ENCODE measurements at regions of chr22 and their contacts with region 1.

Region 1: DNA sequence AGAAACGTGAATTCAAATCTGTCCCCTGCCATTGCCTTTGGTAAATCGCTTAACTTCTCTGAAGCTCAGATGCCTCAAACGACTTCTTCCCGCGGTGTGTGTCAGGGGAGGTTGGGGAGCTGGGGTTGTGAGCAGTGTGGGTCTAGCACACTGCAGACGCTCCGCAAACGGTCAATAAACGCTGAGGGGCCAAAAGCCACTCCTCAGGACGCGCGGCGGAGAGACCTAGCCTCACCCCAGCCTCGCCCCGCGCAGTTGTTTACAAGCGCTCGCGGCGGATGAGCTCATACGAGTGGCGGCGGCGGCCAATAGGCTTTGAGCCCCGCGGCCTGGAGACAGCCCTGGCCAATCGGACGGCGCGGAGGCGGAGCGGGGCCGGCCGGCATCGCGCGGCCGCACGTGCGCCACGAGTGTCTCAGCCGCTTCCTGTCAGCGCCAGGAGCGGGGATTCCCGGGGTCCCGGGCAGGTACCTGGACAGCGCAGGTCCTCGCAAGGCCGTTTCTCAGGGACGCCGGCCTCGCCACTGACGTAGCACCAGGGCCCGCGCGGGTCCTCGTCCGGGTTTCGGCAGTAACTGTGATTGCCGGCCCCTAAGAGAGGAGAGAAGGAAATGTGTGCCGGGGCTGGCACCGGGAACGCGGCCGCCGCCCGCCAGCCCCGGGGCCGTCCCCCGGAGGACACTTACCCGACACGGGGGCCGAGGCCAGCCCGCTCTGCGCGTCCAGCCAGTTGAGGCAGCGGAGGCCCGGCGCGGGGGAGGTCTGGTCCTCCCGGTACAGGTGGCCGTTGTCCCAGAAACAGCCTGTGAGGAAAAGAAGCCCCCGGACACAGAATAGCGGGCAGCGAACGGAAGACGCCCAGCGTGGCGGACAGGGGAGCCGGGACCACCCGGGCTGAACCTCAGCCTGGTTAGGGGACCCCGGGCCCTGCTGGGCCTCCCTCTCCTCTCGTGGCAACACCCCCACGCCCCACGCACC is 1.5 kb downstream of the PIK3IP1 start:
- DNase-seq: peak; percentile 93 to 97 (median 96)
- ATAC-seq: peak; percentile 68 to 72
- H3K4me3 Mint-ChIP-seq: peak overlapping the region; percentile 92 to 100 (median 98)
- H3K27ac Mint-ChIP-seq: peak overlapping the region; percentile 99 to 100 (median 100)
- H3K4me1 Mint-ChIP-seq: peaks cover 31 to 78% (median 66%) of the 10 kb centered on the region in 4 donors
- H3K27me3 Mint-ChIP-seq: peaks cover 0 to 5% (median 0%) of the 10 kb centered on the region in 5 donors

Region 2: DNA sequence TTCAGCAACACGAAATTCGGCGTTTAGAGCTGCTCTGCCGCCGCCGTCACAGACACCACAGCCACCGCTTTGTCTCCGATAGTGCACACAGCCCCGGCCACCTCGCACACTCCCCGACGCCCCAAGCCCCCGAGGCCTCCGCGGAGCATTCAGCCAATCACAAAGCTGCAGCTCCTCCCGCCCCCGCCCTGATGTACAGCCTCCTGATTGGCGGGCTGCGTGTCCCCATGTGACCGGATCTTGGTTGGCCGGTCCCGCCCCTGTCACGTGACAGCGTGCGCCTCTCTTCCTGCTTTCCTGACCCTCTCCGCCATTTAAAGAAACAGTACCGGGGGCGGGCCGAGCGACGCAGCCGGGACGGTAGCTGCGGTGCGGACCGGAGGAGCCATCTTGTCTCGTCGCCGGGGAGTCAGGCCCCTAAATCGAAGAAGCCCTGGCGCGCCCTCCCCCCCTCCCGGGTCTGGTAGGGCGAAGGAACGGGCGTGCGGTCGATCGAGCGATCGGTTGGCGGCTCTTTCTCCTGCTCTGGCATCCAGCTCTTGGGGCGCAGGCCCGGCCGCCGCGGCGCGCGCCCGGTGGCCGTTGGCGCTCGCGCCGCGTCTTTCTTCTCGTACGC is 321.8 kb before region 1 on chr22 and contains the start of gene TUG1:
- POLR2A ChIA-PET with region 1: interaction called, 40 read pairs
- DNase-seq: peak; percentile 91 to 99 (median 98)
- ATAC-seq: peak; percentile 92 to 94
- H3K4me3 Mint-ChIP-seq: peak within 1 kb of the TSS; percentile 89 to 97 (median 93)
- H3K27ac Mint-ChIP-seq: peak within 1 kb of the TSS; percentile 93 to 98 (median 97)
- H3K4me1 Mint-ChIP-seq: peaks cover 13 to 63% (median 42%) of the 10 kb centered on the region in 4 donors
- H3K27me3 Mint-ChIP-seq: no peaks in the 10 kb centered on the region
- polyA plus RNA-seq, gene TUG1: 19.0 to 27.2 (median 19.4) TPM

Region 3: DNA sequence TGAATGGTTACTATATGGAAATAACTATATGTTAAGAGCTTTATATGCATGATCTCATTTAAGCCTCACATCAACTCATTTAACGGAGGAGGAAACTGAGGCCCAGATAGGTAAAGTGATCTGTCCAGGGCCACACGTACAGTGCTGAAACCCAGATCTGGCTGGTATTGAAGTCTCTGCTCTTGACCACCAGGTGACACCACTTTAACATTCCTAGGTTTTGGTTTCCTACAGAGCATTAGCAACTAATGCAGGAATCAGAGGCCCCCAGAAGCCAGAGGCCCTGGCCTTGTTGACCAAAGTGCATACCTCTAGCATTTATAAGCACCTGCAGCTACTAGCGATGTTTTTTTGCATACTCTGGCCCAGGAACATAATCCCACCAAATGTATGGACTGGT is 91.6 kb before region 1 on chr22:
- POLR2A ChIA-PET with region 1: no interaction called
- DNase-seq: no peak
- ATAC-seq: no peak
- H3K4me3 Mint-ChIP-seq: no peak overlapping the region
- H3K27ac Mint-ChIP-seq: peak overlapping the region in 2 of 10 donors; percentile 43 to 46
- H3K4me1 Mint-ChIP-seq: peaks cover 0 to 4% (median 0%) of the 10 kb centered on the region in 4 donors
- H3K27me3 Mint-ChIP-seq: no peaks in the 10 kb centered on the region

Region 4: DNA sequence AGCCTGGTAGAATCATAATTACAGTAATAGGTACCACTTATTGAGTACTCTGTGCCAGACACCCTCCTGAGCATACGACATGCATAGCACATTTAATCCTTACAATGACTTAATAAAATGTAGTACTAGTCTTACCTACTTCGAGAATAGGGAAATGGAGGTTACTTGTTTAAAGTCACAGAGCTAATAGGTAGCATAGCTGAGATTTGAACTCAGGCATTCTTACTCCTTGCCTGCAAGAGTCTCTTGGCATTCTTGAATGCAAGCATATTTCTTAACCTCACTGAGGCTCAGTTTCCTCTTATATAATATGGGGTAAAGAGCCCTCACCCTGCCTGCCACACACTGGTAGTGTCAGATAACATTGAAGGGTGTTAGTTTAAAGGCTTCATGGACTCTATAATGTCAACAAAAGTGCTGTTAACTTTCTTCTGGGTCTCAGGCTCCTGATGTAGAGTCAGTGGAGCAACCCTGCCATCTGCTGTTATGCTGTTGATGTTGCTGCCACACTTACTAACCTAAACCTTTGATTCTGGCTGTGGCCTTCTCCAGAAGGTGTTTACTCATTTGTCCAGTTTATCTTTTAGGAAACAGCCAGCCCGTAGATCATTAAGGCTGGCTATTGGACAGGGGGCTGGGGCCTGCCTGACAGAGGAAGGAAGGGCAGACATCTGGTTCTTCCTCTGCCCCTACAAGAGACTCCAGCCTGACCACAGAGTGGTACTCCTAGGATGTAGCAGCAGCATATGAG is 59.7 kb before region 1 on chr22:
- POLR2A ChIA-PET with region 1: interaction called, 18 read pairs
- DNase-seq: peak in 9 of 10 donors; percentile 34 to 77 (median 55)
- ATAC-seq: peak; percentile 89 to 90
- H3K4me3 Mint-ChIP-seq: peak overlapping the region in 5 of 10 donors; percentile 27 to 61 (median 44)
- H3K27ac Mint-ChIP-seq: peak overlapping the region in 9 of 10 donors; percentile 53 to 97 (median 75)
- H3K4me1 Mint-ChIP-seq: peaks cover 31 to 48% (median 41%) of the 10 kb centered on the region in 4 donors
- H3K27me3 Mint-ChIP-seq: no peaks in the 10 kb centered on the region

Region 5: DNA sequence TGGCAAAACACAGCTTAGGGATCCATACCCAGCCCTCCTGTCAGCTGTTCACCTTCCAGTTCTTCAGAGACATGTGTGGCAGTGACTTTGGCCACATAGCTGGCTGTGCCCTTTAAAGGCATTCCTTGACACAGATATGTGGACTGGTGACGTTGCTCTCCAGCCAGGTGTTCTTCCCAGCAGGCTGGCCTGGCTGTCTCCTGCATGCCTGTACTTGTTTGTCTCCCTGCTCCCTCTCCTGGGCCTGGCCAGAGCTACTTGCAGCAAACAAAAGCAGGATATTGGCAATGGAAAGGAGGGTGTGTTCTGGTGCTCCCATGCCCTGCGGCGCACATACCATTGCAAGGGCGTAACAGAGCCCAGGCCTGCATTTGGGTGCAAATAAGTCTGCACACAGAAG is 36.8 kb before region 1 on chr22:
- POLR2A ChIA-PET with region 1: interaction called, 68 read pairs
- DNase-seq: no peak
- ATAC-seq: no peak
- H3K4me3 Mint-ChIP-seq: no peak overlapping the region
- H3K27ac Mint-ChIP-seq: no peak overlapping the region
- H3K4me1 Mint-ChIP-seq: peaks cover 8 to 22% (median 13%) of the 10 kb centered on the region in 4 donors
- H3K27me3 Mint-ChIP-seq: no peaks in the 10 kb centered on the region

Region 6: DNA sequence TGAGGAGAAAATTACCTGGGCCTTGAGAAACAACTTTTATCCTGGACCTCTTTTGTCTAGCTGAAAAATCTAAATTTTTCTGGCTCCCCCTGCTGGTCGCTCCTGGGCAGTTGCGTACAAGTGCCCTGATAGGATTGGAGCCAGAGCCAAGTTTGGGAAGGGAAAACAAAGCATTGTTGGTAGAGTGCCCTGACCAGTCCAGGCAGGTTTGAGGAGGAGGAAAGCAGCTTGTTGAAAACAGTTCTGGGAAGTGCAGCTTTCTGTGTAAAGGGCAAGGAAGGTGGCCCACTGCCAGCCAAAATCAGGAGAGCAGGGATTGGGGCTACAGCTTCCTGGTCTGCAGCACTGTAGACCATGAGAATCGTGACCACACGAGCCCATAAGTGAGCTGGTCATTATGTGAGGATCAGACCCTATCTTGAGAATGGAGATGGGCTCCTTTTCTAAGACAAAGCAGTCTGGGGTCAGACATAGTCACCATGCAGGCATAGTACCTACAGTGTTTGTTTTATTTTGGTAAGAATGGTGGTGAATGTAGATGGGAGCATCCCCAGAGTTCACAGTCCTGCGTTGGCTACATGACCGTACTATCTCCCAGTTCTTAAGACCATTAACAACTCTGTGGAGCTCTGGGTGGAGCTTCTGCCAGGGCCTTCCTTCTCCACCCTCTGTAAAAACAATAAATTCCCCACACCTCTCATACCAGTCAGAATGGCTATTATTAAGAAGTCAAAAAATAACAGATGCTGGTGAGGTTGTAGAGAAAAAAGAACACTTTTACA is 22.8 kb after region 1 on chr22:
- POLR2A ChIA-PET with region 1: interaction called, 407 read pairs
- DNase-seq: peak; percentile 36 to 79 (median 64)
- ATAC-seq: peak; percentile 71 to 78
- H3K4me3 Mint-ChIP-seq: peak overlapping the region in 2 of 10 donors; percentile 1 to 3
- H3K27ac Mint-ChIP-seq: peak overlapping the region; percentile 15 to 92 (median 64)
- H3K4me1 Mint-ChIP-seq: peaks cover 7 to 29% (median 17%) of the 10 kb centered on the region in 4 donors
- H3K27me3 Mint-ChIP-seq: no peaks in the 10 kb centered on the region

Region 7: DNA sequence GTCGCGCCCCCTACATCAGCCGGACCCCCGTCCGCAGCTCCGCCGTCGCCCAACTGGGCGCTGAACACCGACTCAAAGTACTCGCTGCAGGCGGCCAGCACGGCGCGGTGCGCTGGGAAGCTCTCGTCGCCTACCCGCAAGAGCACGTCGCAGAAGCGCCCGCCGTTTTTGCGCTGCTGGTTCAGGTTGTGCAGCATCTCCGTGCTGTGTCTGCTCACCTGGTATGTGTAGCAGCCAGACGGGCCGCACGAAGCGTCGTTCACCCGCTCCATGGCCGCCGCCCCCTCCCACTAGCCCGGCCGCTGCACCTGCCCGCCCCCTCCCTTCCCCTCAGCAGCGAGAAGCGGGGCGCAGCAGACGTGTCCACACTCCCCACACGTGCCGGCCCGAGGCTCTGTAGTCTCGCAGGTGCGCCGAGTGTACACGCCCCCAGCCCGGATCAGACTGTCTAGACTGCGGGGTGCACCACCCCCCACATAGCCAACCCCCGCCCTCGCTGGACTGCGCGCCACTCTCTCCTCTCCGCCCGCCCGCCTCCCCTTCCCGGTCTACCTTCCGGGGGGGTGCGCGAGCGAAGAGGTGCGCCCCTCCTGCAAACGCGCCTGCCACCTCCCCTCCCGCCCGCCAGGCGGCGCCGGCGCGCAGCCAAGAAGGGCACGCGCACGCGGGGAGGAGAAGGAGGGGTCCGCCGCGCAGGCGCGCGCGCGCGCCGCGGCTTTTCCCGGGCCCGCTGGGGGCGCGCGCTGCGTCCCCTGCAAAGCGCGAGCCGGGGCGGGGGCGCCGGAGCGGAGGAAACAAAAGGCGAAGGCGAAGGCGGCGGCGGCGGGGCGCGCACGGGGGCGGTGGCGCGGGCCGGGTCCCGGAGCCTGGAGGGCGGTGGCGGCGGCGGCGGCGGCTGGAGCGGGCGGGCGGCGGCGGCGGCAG is 54.8 kb after region 1 on chr22:
- POLR2A ChIA-PET with region 1: interaction called, 352 read pairs
- DNase-seq: peak; percentile 89 to 96 (median 93)
- ATAC-seq: peak; percentile 68 to 71
- H3K4me3 Mint-ChIP-seq: peak overlapping the region; percentile 88 to 96 (median 91)
- H3K27ac Mint-ChIP-seq: peak overlapping the region; percentile 82 to 97 (median 92)
- H3K4me1 Mint-ChIP-seq: peaks cover 25 to 53% (median 51%) of the 10 kb centered on the region in 4 donors
- H3K27me3 Mint-ChIP-seq: no peaks in the 10 kb centered on the region

Region 8: DNA sequence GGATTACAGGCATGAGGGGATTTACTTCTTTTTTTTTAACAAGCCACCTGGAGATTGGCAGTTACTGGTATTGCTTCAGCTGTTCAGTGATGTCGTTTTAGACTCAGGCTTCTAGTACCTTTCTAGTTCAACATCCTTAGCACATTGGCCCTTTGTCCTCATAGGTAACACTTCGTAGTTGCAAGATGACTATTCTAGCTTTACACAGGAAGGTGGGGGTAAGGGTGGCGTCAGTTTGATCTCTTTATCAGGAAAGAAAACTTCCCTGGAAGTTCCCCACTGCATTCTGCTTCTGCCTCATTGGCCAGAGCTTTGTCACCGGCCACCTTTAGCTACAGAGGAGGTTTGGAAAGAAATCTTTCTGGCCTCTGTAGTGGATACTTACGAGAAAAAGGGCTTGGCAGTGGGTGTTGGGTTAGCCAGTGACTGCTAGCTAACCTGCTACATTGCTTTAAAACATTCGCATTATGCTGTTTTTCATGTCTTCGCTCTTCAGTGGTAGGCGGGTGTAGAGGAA is 246.3 kb after region 1 on chr22:
- POLR2A ChIA-PET with region 1: no interaction called
- DNase-seq: no peak
- ATAC-seq: no peak
- H3K4me3 Mint-ChIP-seq: no peak overlapping the region
- H3K27ac Mint-ChIP-seq: peak overlapping the region in 9 of 10 donors; percentile 11 to 82 (median 46)
- H3K4me1 Mint-ChIP-seq: peaks cover 13 to 36% (median 23%) of the 10 kb centered on the region in 4 donors
- H3K27me3 Mint-ChIP-seq: no peaks in the 10 kb centered on the region

Region 9: DNA sequence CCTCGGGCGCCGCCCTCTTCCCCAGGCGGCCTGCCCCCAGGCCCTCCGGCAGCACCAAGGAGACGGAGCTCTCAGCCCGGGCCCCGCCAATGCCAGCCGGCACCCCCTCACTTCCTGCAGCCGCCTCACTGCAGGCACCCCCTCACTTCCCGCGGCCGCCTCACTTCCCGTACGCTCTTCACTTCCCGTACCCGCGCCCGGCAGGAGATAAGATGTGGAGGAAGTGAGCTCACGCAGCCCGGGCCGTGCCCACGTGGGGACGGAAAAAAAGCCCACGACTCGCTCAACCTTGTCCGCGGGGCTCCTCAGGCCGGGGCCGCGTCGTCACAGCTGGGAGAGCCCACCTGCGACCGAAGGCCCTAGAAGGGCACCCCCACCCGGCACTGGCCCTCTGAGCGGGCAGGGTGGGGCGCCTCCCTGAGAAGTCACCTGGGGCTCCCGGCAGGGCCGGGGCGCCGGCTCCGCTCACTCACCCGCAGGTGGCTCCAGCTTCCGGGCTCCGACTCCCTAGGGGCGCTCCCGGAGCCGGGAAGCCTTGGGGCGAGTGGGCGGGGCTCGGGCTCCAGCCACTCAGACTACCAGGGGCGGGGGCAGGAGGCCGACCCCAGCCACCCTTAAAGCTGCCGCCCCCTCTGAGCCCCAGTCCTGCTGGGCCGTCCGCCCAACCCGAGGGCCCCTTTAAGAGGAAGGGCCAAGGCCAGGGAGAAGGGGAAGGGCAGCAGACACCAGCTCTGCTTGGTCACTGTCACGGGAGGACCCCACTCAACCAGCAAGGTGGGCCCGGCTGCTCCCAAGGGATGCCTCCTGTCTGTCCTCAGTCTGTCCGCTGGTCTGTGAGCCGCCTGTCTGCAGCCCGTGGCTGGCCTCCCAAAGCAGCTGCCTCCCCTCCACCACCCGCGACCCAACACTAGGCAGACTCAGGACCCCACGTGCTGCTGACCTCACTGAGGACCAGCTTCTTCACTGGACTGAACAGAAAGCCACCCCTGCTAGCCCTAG is 339.8 kb after region 1 on chr22:
- POLR2A ChIA-PET with region 1: interaction called, 10 read pairs
- DNase-seq: peak; percentile 82 to 94 (median 86)
- ATAC-seq: peak; percentile 90 to 94
- H3K4me3 Mint-ChIP-seq: peak overlapping the region; percentile 83 to 93 (median 88)
- H3K27ac Mint-ChIP-seq: peak overlapping the region; percentile 84 to 97 (median 94)
- H3K4me1 Mint-ChIP-seq: peaks cover 26 to 68% (median 55%) of the 10 kb centered on the region in 4 donors
- H3K27me3 Mint-ChIP-seq: no peaks in the 10 kb centered on the region